Common myeloid progenitor, CD34-positive (primary cell): ENCODE measurements at regions of chr12 and their contacts with region 1.

Region 1: GRCh38 chr12:53174881-53175491 is 5.5 kb upstream of the ZNF740 start:
- DNase-seq: peak in 2 of 3 donors; percentile 32 to 43
- H3K4me3 ChIP-seq: no peak overlapping the region
- H3K27ac ChIP-seq: no peak overlapping the region
- H3K4me1 ChIP-seq: peaks cover 3 to 12% (median 8%) of the 10 kb centered on the region in 4 experiments
- H3K27me3 ChIP-seq: no peaks in the 10 kb centered on the region

Region 2: GRCh38 chr12:53200458-53201176 is 25.6 kb after region 1 on chr12:
- CTCF ChIA-PET with region 1: interaction called, 32 read pairs
- POLR2A ChIA-PET with region 1: no interaction called
- DNase-seq: peak in 2 of 3 donors; percentile 40 to 57
- H3K4me3 ChIP-seq: no peak overlapping the region
- H3K27ac ChIP-seq: peak overlapping the region in 1 of 2 experiments; percentile 49
- H3K4me1 ChIP-seq: peaks cover 9 to 47% (median 39%) of the 10 kb centered on the region in 4 experiments
- H3K27me3 ChIP-seq: no peaks in the 10 kb centered on the region